ENCODE measurements at regions of chr1 and their contacts with region 1.

Region 1: GRCh38 chr1:59266180-59266926 is 30.5 kb upstream of the FGGY start:
- DNase-seq: peak; percentile 85
- ATAC-seq: peak; percentile 96
- H3K4me3 ChIP-seq: peak overlapping the region in 1 of 5 experiments; percentile 24
- H3K4me3 Mint-ChIP-seq: peak overlapping the region; percentile 35
- H3K27ac ChIP-seq: peak overlapping the region; percentile 48 to 76
- H3K27ac Mint-ChIP-seq: peak overlapping the region; percentile 95
- H3K4me1 ChIP-seq: peaks cover 22 to 34% of the 10 kb centered on the region in 2 donors
- H3K4me1 Mint-ChIP-seq: peaks cover 39% of the 10 kb centered on the region
- H3K27me3 ChIP-seq: no peaks in the 10 kb centered on the region
- H3K27me3 Mint-ChIP-seq: no peaks in the 10 kb centered on the region
- CTCF ChIP-seq: no peak

Region 2: GRCh38 chr1:59290193-59290947 is 24.0 kb after region 1 on chr1:
- CTCF ChIA-PET with region 1: interaction called, 8 read pairs
- POLR2A ChIA-PET with region 1: interaction called, 4 read pairs
- intact Hi-C with region 1: loop called (anchors 1 kb)
- DNase-seq: peak; percentile 47
- ATAC-seq: peak; percentile 58
- H3K4me3 ChIP-seq: no peak overlapping the region
- H3K4me3 Mint-ChIP-seq: no peak overlapping the region
- H3K27ac ChIP-seq: no peak overlapping the region
- H3K27ac Mint-ChIP-seq: no peak overlapping the region
- H3K4me1 ChIP-seq: peaks cover 16 to 22% of the 10 kb centered on the region in 2 donors
- H3K4me1 Mint-ChIP-seq: peaks cover 32% of the 10 kb centered on the region
- H3K27me3 ChIP-seq: no peaks in the 10 kb centered on the region
- H3K27me3 Mint-ChIP-seq: no peaks in the 10 kb centered on the region
- CTCF ChIP-seq: peak; percentile 46